ENCODE measurements at regions of chr11 and their contacts with region 1.

Region 1: GRCh38 chr11:119432484-119433357 is 9.7 kb upstream of the THY1 start:
- DNase-seq: peak; percentile 56
- H3K4me3 ChIP-seq: peak overlapping the region; percentile 27
- H3K27me3 ChIP-seq: no peaks in the 10 kb centered on the region
- CTCF ChIP-seq: no peak

Region 2: DNA sequence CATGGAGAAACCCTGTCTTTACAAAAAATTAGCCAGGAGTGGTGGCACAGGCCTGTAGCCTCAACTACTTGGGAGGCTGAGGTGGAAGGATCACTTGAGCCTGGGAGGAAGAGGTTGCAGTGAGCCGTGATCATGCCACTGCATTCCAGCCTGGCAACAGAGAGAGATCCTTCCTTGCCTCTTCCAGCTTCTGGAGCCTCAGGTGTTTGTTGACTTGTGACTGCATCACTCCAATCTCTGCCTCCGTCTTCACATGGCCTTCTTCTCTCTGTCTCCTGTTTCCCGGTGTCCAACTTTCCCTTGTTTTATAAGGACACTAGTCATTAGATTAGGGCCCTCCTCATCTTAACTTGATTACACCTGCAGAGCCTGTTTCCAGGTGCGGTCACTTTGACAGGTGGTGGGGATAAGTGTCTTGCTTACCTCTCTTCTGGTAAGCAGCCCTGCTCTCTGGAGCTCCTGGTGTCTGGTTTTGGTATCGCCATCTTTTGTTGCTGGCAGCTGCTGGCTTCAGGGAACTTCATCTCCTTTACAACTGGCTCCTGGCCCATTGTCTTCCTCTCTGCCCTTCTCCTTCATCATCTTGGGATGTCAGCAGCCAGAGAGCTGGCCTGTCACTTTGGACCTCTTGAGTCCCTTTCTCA is 43.0 kb before region 1 on chr11:
- CTCF ChIA-PET with region 1: no interaction called
- POLR2A ChIA-PET with region 1: interaction called, 17 read pairs
- DNase-seq: no peak
- H3K4me3 ChIP-seq: no peak overlapping the region
- H3K27me3 ChIP-seq: peaks cover 6% of the 10 kb centered on the region
- CTCF ChIP-seq: peak; percentile 47

Region 3: DNA sequence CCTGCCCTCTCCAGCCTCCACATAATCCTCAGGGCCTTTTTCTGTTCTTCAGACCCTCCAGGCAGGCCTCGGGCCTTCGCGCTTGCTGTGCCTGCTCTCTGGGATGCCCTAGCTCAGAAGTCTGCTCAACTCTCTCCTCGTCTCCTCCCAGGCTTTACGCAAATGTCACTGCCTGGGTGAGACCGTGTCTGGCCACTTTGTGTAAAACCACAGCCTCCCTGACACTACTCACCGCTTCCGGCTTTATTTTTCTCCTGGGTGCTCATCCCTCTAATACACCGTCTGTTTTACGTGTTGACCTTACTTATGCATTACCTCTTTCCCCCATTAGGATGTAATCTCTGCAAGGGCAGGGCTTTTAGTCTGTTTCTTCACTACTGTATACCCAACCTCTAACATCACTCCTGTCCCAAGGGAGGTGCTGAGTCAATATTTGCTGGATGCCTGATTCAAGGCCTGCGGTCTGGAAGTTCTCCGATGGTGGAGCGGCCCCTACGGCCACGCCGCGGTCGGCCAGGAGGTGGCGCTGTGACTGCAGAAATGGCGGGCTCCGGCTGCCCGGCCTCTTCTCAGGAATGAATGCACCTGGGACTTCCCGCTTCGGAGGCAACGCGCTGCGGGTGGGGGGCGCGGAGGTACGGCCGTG is 48.4 kb after region 1 on chr11:
- CTCF ChIA-PET with region 1: no interaction called
- POLR2A ChIA-PET with region 1: no interaction called
- DNase-seq: peak; percentile 44
- H3K4me3 ChIP-seq: no peak overlapping the region
- H3K27me3 ChIP-seq: peaks cover 7% of the 10 kb centered on the region
- CTCF ChIP-seq: peak; percentile 98